Head of caudate nucleus (tissue), 42 donors: ENCODE measurements at regions of chr5 and their contacts with region 1.

Region 1: GRCh38 chr5:173887610-173888472 is at the start of gene CPEB4:
- DNase-seq: peak; percentile 96 to 100 (median 99)

Region 2: GRCh38 chr5:173615884-173616576 is 271.8 kb before region 1 on chr5:
- intact Hi-C with region 1: loop called (anchors 5 kb)
- DNase-seq: peak; percentile 38 to 89 (median 76)

Region 3: DNA sequence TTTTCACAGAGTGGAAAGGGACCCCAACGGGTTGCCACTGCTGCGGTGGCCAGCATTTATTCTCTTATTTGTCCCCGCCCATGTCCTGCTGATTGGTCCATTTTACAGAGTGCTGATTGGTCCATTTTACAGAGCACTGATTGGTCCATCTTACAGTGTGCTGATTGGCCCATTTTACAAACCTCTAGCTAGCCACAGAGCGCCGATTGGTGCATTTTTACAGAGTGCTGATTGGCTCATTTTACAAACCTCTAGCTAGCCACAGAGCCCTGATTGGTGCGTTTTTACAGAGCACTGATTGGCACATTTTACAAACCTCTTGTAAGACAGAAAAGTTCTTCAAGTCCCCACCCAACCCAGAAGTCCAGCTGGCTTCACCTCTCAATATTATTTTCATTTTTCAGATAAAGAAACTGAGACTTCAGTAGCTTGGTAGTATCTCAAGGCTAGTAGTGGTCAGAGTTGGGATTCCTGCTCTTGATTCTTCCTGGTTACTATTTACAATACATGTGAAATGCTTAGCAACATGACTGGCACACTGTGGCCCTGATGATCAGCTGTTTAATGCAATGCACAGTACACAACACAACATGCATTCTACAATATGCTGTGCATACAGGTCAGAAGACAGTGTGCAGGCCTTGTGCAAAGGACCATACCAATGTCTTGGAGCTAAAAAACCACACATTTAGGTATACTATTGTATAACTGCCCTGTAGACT is 207.8 kb before region 1 on chr5:
- intact Hi-C with region 1: loop called (anchors 10 kb)
- DNase-seq: no peak

Region 4: DNA sequence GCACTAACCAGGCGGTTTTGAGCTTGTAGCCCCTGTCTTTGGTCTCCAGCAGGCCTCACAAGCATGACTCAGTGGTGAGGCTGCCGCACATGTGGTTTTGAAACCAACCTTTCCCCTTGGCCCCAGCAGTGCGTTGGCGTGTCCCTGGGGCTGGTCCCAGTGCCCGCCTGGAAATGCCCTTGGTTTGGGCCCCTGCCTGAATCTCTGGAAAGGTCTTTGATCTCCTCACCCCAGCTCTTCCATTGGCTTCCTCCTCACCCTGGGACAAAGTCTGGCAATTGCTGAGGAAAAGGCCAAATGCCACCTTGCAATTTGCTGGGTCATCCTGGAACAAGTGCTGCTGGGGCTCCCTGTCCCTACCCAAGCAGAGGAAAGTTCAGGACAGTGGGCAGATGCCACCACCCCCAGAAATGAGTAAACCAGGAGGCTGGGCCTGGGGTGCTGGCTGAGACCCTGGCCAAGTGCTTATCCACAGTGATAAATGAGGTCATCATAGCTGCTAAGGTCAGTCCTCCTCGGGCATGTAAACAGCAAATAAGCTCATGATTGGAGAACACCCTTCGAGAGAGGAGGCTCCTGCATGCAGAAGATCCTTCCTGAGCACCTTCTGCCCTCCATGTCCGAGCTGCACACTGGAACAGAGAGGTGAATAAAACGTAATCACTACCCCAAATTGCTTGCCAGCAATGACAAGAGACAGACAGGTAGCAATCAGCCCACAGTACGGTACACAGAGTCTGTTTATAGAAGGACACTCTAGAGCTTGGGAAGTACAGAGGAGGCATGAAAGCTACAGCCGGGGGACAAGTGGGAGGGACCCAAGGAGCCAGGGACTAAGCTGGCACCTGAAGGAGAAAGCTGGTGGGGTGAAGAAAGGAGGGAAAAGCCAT is 98.6 kb before region 1 on chr5:
- intact Hi-C with region 1: no loop called
- DNase-seq: peak in 1 of 42 donors; percentile 22

Region 5: GRCh38 chr5:173972925-173973615 is 85.2 kb after region 1 on chr5:
- intact Hi-C with region 1: loop called (anchors 5 kb)
- DNase-seq: peak; percentile 74 to 97 (median 91)

Region 6: GRCh38 chr5:174436781-174437201 is 549.0 kb after region 1 on chr5:
- intact Hi-C with region 1: no loop called
- DNase-seq: no peak